B cell (primary cell): ENCODE measurements at regions of chr2 and their contacts with region 1.

Region 1: DNA sequence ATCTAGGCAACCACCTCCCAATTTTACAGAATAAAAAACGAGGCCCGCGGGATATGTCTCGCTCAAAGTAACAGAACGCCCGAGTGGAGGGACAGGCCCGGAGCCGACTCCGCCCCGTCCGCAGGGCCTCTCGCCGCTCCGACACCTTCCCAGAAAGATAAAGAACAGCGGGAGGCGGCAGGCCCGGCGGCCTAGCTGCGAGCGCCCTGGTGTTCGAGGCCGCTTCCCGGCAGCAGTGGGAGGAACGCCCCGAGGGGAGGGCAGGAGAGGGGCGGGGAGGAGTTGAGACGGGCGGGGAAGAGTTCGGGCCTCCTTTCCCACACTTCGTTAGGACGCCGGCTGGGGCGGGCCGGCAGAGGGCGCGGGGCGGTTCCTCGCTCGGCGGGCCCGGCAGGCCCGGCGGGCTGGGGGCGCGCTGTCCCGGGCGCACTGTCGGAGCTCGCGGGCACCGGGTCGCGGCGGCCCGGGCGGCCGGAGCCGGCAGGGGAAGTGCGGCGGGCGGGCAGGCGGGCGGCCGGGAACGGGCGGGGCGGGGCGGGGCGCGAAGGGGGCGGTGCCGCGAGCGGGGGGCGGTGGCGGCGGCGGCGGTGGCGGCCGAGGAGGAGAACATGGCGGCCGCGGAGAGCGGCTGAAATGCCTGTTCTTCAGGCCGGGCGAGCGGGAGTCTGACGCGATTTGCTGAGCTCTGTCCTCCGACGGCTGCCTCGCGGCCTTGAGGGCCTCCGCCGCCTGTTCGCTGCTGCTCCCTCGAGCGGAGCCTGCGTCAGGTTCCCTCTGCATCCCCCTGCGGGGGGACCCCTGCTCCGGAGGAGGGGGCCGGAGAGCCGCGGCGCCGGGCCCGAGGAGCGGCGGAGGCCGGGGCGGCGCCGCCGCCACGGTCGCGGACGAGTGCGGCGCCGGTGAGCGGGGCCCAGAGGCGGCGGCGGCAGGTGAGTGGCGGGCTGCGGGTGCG is at the start of gene NCOA1:
- DNase-seq: peak; percentile 92
- ATAC-seq: peak; percentile 80
- H3K4me3 ChIP-seq: peak within 1 kb of the TSS; percentile 65 to 83 (median 67)
- H3K4me3 Mint-ChIP-seq: peak within 1 kb of the TSS; percentile 95
- H3K27ac ChIP-seq: peak within 1 kb of the TSS; percentile 76 to 79
- H3K27ac Mint-ChIP-seq: peak within 1 kb of the TSS; percentile 96
- H3K4me1 ChIP-seq: peaks cover 22 to 23% of the 10 kb centered on the region in 2 donors
- H3K4me1 Mint-ChIP-seq: peaks cover 43% of the 10 kb centered on the region
- H3K27me3 ChIP-seq: no peaks in the 10 kb centered on the region
- H3K27me3 Mint-ChIP-seq: no peaks in the 10 kb centered on the region
- CTCF ChIP-seq: no peak
- total RNA-seq, gene NCOA1: 48.5 and 49.1 TPM in 2 replicates

Region 2: DNA sequence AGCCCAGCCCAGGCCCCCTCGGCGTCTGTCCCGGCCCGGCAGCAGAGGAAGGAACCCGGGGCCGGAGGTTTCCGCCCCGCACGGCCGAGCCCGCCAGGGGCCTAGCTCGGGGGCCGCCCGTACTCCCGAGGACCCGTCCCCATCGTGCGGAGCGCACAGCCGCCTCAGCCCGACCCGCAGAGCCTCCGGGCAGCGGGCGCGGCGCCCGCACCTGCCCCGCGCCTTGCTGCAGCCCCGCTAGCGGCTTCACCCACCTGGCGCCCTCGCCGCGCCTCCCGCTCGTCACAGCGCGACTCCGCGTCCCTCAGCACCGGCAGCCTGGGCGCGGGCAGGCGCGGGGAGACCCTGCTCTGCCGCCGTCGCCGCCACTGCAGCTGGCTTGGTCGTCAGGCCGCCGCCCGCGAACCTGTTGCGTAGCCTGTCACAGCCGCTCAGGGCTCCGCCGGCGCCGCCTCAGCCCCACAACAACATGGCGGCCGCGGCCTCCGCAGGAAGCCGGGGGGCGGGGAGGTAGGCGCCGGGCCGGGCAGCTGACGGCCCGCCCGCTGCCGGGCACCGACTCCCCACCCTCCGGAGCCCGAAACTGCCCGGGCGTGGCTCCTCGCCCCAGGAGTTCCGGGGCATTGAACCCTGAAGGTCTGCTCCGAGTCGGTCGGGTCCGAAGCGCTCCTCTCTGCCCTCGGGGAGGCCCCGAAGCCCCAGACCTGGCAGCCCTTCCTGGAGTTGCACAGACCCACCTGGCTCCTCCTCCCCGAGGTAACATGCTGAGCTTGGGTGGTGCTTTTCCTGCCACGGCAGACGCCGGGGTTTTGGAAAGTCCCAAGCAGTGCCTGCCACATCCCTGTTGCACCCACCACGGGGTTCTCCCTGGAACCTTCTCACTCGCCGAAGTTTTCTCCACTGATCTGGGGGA is 130.6 kb before region 1 on chr2 and contains the start of gene ITSN2:
- CTCF ChIA-PET with region 1: no interaction called
- POLR2A ChIA-PET with region 1: no interaction called
- intact Hi-C with region 1: loop called (anchors 1 kb)
- DNase-seq: peak; percentile 96
- ATAC-seq: peak; percentile 84
- H3K4me3 ChIP-seq: peak within 1 kb of the TSS; percentile 75 to 91 (median 88)
- H3K4me3 Mint-ChIP-seq: peak within 1 kb of the TSS; percentile 93
- H3K27ac ChIP-seq: peak within 1 kb of the TSS; percentile 97 to 99
- H3K27ac Mint-ChIP-seq: peak within 1 kb of the TSS; percentile 99
- H3K4me1 ChIP-seq: peaks cover 40 to 46% of the 10 kb centered on the region in 2 donors
- H3K4me1 Mint-ChIP-seq: peaks cover 50% of the 10 kb centered on the region
- H3K27me3 ChIP-seq: no peaks in the 10 kb centered on the region
- H3K27me3 Mint-ChIP-seq: no peaks in the 10 kb centered on the region
- CTCF ChIP-seq: no peak
- total RNA-seq, gene ITSN2: 200 and 203 TPM in 2 replicates

Region 3: GRCh38 chr2:24785671-24786321 is 294.8 kb after region 1 on chr2:
- CTCF ChIA-PET with region 1: no interaction called
- POLR2A ChIA-PET with region 1: no interaction called
- intact Hi-C with region 1: loop called (anchors 2 kb)
- DNase-seq: peak; percentile 87
- ATAC-seq: peak; percentile 97
- H3K4me3 ChIP-seq: peak overlapping the region in 4 of 5 experiments; percentile 27 to 44 (median 29)
- H3K4me3 Mint-ChIP-seq: peak overlapping the region; percentile 76
- H3K27ac ChIP-seq: peak overlapping the region; percentile 51 to 74
- H3K27ac Mint-ChIP-seq: peak overlapping the region; percentile 92
- H3K4me1 ChIP-seq: peaks cover 23 to 27% of the 10 kb centered on the region in 2 donors
- H3K4me1 Mint-ChIP-seq: peaks cover 25% of the 10 kb centered on the region
- H3K27me3 ChIP-seq: peaks cover 0 to 42% (median 23%) of the 10 kb centered on the region in 4 experiments
- H3K27me3 Mint-ChIP-seq: peaks cover 16% of the 10 kb centered on the region
- CTCF ChIP-seq: no peak

Region 4: DNA sequence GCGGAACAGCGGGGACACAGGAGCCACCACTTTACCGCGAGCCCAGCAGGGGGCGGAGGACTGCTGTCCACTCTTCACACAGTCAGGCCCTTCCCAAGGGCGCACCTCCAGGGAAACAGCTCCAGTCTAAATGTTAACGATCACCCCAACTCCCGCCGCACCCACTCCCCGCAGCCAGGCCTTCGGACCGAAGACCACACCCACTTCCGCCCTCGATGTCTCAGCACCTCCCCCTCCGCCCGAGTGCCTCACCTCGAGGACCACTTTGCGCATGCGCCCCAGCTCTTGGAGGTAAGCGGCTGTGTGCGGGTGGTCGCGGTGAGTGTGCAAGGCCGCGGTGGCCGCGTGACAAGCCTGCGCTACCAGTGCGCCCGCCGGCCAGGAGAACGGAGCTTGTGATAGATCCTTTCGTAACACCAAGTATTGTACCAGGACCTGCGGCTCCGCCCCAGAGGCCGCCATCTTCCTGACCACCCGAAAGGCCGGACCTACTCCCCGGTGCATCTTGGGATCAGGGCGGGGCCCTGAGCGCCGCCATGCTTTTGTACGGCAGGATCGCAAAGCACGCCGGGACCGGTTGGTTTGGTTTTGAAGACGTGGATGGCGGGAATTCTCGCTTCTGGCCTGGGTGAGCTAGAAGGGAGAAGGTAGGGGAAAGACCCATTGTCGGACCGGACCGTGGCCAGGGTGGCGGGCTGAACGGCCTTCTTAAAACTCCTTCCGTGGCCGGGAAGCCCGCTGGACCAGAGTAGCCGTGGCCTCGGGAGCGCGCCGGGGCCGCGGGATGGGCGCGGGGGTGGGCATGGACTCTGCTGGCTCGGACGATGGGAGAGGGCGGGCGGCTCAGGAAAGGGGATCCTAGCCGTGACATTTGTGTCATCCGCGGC is 302.2 kb after region 1 on chr2 and contains the starts of genes CENPO and PTRHD1:
- CTCF ChIA-PET with region 1: interaction called, 6 read pairs
- POLR2A ChIA-PET with region 1: no interaction called
- intact Hi-C with region 1: loop called (anchors 1 kb)
- DNase-seq: peak; percentile 99
- ATAC-seq: peak; percentile 96
- H3K4me3 ChIP-seq: peak within 1 kb of the TSS; percentile 51 to 91 (median 82)
- H3K4me3 Mint-ChIP-seq: peak within 1 kb of the TSS; percentile 99
- H3K27ac ChIP-seq: peak within 1 kb of the TSS; percentile 84 to 87
- H3K27ac Mint-ChIP-seq: peak within 1 kb of the TSS; percentile 100
- H3K4me1 ChIP-seq: peaks cover 10 to 16% of the 10 kb centered on the region in 2 donors
- H3K4me1 Mint-ChIP-seq: peaks cover 19% of the 10 kb centered on the region
- H3K27me3 ChIP-seq: no peaks in the 10 kb centered on the region
- H3K27me3 Mint-ChIP-seq: no peaks in the 10 kb centered on the region
- CTCF ChIP-seq: peak; percentile 68
- total RNA-seq, gene CENPO: 10.4 and 10.8 TPM in 2 replicates
- total RNA-seq, gene PTRHD1: 20.2 and 20.4 TPM in 2 replicates

Region 5: GRCh38 chr2:25673300-25674076 is 1182.5 kb after region 1 on chr2 and contains the start of gene DTNB:
- CTCF ChIA-PET with region 1: no interaction called
- POLR2A ChIA-PET with region 1: no interaction called
- intact Hi-C with region 1: loop called (anchors 5 kb)
- DNase-seq: peak; percentile 89
- ATAC-seq: peak; percentile 74
- H3K4me3 ChIP-seq: peak within 1 kb of the TSS; percentile 75 to 85 (median 82)
- H3K4me3 Mint-ChIP-seq: peak within 1 kb of the TSS; percentile 94
- H3K27ac ChIP-seq: peak within 1 kb of the TSS; percentile 59 to 71
- H3K27ac Mint-ChIP-seq: peak within 1 kb of the TSS; percentile 91
- H3K4me1 ChIP-seq: peaks cover 8 to 16% of the 10 kb centered on the region in 2 donors
- H3K4me1 Mint-ChIP-seq: peaks cover 16% of the 10 kb centered on the region
- H3K27me3 ChIP-seq: peaks cover 0 to 2% (median 0%) of the 10 kb centered on the region in 4 experiments
- H3K27me3 Mint-ChIP-seq: no peaks in the 10 kb centered on the region
- CTCF ChIP-seq: no peak
- total RNA-seq, gene DTNB: 37.3 and 45.8 TPM in 2 replicates